ENCODE measurements at regions of chr12 and their contacts with region 1.

Region 1: DNA sequence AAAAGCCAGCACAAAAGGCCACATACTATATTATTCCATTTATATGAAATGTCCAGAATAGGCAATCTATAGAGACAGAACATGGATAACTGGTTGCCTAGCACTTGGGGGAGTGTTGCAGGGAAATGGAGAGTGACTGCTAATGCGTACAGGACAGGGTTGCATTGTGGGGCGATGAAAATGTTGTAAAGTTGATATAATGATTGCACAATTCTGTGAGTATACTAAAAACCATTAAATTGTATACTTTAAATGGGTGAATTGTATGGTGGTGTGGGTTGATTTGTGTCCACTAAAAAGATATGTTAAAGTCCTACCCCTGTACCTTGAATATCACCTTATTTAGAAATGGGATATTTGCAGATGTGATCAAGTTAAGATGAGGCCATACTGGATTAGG is 7.0 kb upstream of the CAPRIN2 start:
- DNase-seq: no peak
- H3K4me3 ChIP-seq: no peak overlapping the region
- H3K27ac ChIP-seq: no peak overlapping the region
- H3K4me1 ChIP-seq: no peaks in the 10 kb centered on the region; the same call in 1 of the 2 replicates
- H3K27me3 ChIP-seq: no peaks in the 10 kb centered on the region
- CTCF ChIP-seq: no peak

Region 2: GRCh38 chr12:30739020-30739419 is 22.7 kb before region 1 on chr12:
- CTCF ChIA-PET with region 1: no interaction called
- POLR2A ChIA-PET with region 1: no interaction called
- intact Hi-C with region 1: loop called (anchors 1 kb)
- DNase-seq: no peak
- H3K4me3 ChIP-seq: no peak overlapping the region
- H3K27ac ChIP-seq: no peak overlapping the region
- H3K4me1 ChIP-seq: no peaks in the 10 kb centered on the region
- H3K27me3 ChIP-seq: no peaks in the 10 kb centered on the region
- CTCF ChIP-seq: no peak

Measured in PC-9 (cell line).